AG04450 (cell line): ENCODE measurements at regions of chr16 and their contacts with region 1.

Region 1: DNA sequence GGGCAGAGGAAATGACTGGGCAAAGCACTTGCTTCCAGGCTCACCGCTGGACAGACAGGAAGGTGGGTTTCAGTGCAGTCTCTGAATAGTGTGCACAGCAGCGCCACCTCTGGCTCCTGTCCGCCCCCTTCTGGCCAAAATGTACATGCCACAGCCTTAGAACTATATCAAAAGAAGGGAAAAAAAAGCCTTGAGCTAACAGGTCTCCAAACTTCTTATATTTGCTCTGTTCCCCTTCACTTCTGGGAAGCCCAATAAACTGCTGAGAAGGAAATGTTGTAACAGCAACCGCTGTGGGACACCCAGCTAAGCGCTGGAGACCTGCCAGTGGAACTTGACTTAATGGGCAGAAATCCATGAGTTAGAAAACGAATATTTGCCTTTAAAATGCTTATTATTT is 17.5 kb downstream of the COG7 start:
- DNase-seq: no peak
- H3K4me3 ChIP-seq: no peak overlapping the region
- H3K27ac ChIP-seq: no peak overlapping the region
- H3K27me3 ChIP-seq: no peaks in the 10 kb centered on the region
- CTCF ChIP-seq: peak; percentile 91

Region 2: DNA sequence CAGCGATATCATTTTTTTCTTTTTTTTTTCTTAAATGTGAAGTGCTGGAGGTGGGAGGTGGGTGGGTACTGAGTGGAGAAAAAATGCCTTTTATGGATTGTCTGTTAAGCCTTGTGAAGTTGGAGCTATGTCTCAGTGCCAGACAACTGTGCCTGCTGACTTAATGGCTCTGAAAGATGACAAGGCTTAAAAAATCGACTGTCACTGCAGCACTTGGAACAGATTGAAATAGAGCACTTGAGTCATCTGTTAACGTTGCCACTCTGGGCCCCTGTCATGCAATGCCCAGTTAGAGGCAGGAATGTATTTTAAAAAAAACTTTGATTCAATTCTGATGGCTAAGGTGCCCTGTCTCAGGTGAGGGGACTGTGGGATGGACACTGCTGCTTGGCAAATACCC is 729.7 kb before region 1 on chr16:
- CTCF ChIA-PET with region 1: no interaction called
- POLR2A ChIA-PET with region 1: no interaction called
- DNase-seq: no peak
- H3K4me3 ChIP-seq: no peak overlapping the region
- H3K27ac ChIP-seq: no peak overlapping the region
- H3K27me3 ChIP-seq: no peaks in the 10 kb centered on the region
- CTCF ChIP-seq: no peak

Region 3: GRCh38 chr16:23072084-23072599 is 363.4 kb before region 1 on chr16:
- CTCF ChIA-PET with region 1: interaction called, 37 read pairs
- POLR2A ChIA-PET with region 1: no interaction called
- DNase-seq: peak; percentile 23
- H3K4me3 ChIP-seq: no peak overlapping the region
- H3K27ac ChIP-seq: no peak overlapping the region
- H3K27me3 ChIP-seq: no peaks in the 10 kb centered on the region
- CTCF ChIP-seq: no peak

Region 4: DNA sequence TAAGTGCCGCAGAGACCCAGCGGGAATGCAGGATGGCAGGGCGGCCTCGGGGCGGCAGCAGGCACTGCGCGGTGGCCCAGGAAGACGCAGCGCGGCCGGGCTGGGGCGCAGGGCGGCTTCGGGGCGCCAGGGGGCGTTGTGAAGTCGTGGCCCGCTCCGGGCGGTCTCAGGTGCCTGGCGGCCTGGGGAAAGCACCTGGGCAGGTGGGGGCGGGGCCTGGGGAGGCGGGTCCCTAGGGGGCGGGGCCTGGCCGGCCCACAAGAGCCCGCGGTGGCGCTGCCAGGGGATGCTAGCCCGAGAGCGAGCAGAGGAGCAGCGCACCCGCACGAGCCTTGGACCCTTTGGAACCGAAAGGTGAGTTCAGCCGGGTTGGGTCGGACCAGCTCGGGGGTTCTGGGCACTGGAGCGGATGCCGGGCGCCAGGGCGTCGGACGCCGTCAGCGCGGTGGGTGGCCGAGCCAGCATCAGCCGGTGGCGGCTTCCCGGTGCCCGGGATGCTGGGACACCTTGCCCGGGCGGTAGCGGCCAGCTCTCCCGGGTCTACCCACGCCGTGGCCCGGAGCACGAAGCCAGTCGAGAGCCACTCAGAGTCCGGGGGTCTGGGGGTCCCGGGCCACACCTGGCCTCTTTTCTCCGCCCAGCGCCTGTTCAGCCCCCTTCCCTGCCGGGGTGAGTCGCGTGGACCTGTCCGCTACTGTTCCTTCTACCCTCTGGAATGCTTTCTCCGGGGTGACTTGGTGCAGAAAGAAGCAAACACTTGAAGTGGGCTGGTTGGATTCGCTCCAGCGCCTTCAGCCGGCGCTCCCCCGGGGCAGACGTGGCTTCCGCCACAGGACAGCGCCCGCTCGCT is 252.8 kb before region 1 on chr16 and contains the start of gene SCNN1G:
- CTCF ChIA-PET with region 1: interaction called, 197 read pairs
- POLR2A ChIA-PET with region 1: no interaction called
- DNase-seq: peak; percentile 4
- H3K4me3 ChIP-seq: 0 out of 2 replicates have a peak within 1 kb of the TSS, but pooled peaks have one; percentile 17
- H3K27ac ChIP-seq: no peak within 1 kb of the TSS
- H3K27me3 ChIP-seq: peaks cover 43% of the 10 kb centered on the region
- CTCF ChIP-seq: peak; percentile 55
- polyA plus RNA-seq, gene SCNN1G: not detected in 2 replicates

Region 5: GRCh38 chr16:23398987-23399805 is 36.3 kb before region 1 on chr16:
- CTCF ChIA-PET with region 1: interaction called, 49 read pairs
- POLR2A ChIA-PET with region 1: no interaction called
- DNase-seq: no peak
- H3K4me3 ChIP-seq: no peak overlapping the region
- H3K27ac ChIP-seq: no peak overlapping the region
- H3K27me3 ChIP-seq: no peaks in the 10 kb centered on the region
- CTCF ChIP-seq: no peak

Region 6: GRCh38 chr16:23423496-23424049 is 11.9 kb before region 1 on chr16:
- CTCF ChIA-PET with region 1: interaction called, 93 read pairs
- POLR2A ChIA-PET with region 1: no interaction called
- DNase-seq: peak; percentile 97
- H3K4me3 ChIP-seq: no peak overlapping the region
- H3K27ac ChIP-seq: peak overlapping the region; percentile 93
- H3K27me3 ChIP-seq: no peaks in the 10 kb centered on the region
- CTCF ChIP-seq: no peak

Region 7: GRCh38 chr16:23629516-23629915 is 194.0 kb after region 1 on chr16:
- CTCF ChIA-PET with region 1: no interaction called
- POLR2A ChIA-PET with region 1: no interaction called
- DNase-seq: no peak
- H3K4me3 ChIP-seq: no peak overlapping the region
- H3K27ac ChIP-seq: no peak overlapping the region
- H3K27me3 ChIP-seq: no peaks in the 10 kb centered on the region
- CTCF ChIP-seq: no peak